A673 (cell line): ENCODE measurements at regions of chr16 and their contacts with region 1.

Region 1: GRCh38 chr16:85245307-85246172 is 133.3 kb upstream of the CIBAR2 start:
- DNase-seq: peak; percentile 88
- H3K4me3 ChIP-seq: peak overlapping the region; percentile 20
- H3K27ac ChIP-seq: peak overlapping the region; percentile 45
- H3K4me1 ChIP-seq: peaks cover 62% of the 10 kb centered on the region
- H3K27me3 ChIP-seq: no peaks in the 10 kb centered on the region
- CTCF ChIP-seq: peak; percentile 95

Region 2: GRCh38 chr16:85114909-85115567 is 130.5 kb before region 1 on chr16:
- CTCF ChIA-PET with region 1: interaction called, 9 read pairs
- POLR2A ChIA-PET with region 1: no interaction called
- intact Hi-C with region 1: loop called (anchors 10 kb)
- DNase-seq: peak; percentile 83
- H3K4me3 ChIP-seq: peak overlapping the region; percentile 18
- H3K27ac ChIP-seq: peak overlapping the region; percentile 55
- H3K4me1 ChIP-seq: peaks cover 4% of the 10 kb centered on the region
- H3K27me3 ChIP-seq: no peaks in the 10 kb centered on the region
- CTCF ChIP-seq: peak; percentile 98

Region 3: DNA sequence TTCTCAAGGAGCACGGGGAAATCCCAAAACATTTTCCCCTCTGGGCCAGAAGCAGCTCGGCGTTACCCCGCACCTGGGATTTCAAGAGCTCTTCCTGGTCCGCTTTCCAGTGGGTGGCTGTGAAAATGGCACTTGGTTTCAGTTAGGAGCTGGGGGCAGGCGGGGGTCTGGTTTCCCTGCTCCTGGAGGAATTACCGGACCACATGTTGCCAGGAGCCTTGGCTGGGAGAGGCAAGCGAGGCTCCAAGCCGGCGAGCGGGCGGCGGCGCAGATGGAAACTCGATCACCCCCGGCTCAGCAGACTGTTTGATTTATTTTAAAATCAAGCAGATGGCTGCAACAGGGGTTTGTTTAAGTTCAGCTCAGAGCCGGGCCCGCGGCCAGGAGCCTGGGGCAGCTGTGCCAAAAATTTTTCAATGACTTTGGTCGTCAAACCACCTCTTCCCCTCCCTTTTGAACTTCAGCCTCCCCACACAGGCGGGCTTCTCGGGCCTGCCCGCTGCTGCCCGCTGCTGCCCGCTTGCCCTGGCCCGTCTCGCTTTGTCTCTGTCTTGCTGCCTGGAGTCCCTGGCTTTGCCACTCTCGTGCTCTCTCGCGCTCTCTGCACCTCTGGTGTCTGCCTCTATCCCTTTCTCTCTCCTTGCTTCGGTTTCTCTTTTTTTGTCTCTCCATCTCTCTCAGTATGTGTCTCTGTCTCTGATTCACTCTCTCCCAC is 25.3 kb before region 1 on chr16:
- CTCF ChIA-PET with region 1: no interaction called
- POLR2A ChIA-PET with region 1: interaction called, 16 read pairs
- intact Hi-C with region 1: no loop called
- DNase-seq: peak; percentile 79
- H3K4me3 ChIP-seq: peak overlapping the region; percentile 10
- H3K27ac ChIP-seq: peak overlapping the region; percentile 91
- H3K4me1 ChIP-seq: peaks cover 42% of the 10 kb centered on the region
- H3K27me3 ChIP-seq: no peaks in the 10 kb centered on the region
- CTCF ChIP-seq: no peak

Region 4: DNA sequence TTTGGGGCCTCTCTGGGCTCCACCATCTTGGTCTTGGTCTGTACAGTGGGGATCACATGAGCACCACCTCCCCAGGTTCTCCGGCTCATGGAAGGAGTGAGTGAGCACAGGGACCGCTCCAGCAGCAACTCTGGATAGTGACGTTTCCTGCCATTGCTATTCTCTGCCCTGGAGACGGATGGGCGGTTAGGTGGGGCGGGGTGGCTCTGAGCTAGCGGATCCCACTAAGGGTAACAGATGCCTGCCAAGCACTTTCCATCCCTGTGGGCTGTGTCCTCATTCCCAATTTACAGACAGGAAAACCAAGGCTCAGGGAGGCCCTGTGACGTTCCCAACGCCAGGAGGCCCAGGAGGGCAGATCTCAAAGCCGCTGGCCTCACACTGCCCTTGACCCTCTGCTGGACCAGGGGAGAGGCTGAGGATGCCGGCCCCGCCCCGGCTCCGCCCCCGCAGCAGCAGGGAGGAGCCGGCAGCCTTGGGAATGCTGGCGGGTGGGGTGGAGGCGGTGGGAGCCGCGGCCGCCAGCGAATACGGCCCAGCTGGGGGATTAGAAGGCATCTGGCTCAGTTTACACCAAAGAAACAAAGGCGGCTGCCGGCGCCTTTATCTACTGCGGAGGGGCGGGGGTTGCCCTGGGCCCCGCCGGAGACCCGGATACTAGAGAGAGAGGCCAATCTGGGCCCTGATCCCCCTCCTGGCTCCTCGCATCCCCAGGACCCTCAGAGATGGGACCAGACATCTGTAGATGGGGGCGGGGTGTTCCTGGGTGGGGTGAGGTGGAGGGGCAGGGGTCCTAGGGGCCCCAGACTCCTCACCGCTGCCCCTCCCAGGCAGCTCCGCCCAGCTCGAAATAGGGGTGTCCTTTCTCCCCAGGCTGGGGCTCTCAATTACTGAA is 11.0 kb before region 1 on chr16:
- CTCF ChIA-PET with region 1: interaction called, 12 read pairs
- POLR2A ChIA-PET with region 1: no interaction called
- intact Hi-C with region 1: no loop called
- DNase-seq: peak; percentile 93
- H3K4me3 ChIP-seq: peak overlapping the region; percentile 55
- H3K27ac ChIP-seq: peak overlapping the region; percentile 85
- H3K4me1 ChIP-seq: peaks cover 65% of the 10 kb centered on the region
- H3K27me3 ChIP-seq: no peaks in the 10 kb centered on the region
- CTCF ChIP-seq: no peak

Region 5: GRCh38 chr16:85615852-85616606 is 370.5 kb after region 1 on chr16:
- CTCF ChIA-PET with region 1: interaction called, 11 read pairs
- POLR2A ChIA-PET with region 1: no interaction called
- intact Hi-C with region 1: loop called (anchors 10 kb)
- DNase-seq: peak; percentile 92
- H3K4me3 ChIP-seq: peak overlapping the region; percentile 86
- H3K27ac ChIP-seq: peak overlapping the region; percentile 9
- H3K4me1 ChIP-seq: peaks cover 60% of the 10 kb centered on the region
- H3K27me3 ChIP-seq: no peaks in the 10 kb centered on the region
- CTCF ChIP-seq: peak; percentile 97

Region 6: GRCh38 chr16:85626191-85626981 is 380.8 kb after region 1 on chr16:
- CTCF ChIA-PET with region 1: no interaction called
- POLR2A ChIA-PET with region 1: no interaction called
- intact Hi-C with region 1: loop called (anchors 10 kb)
- DNase-seq: peak; percentile 91
- H3K4me3 ChIP-seq: peak overlapping the region; percentile 21
- H3K27ac ChIP-seq: peak overlapping the region; percentile 71
- H3K4me1 ChIP-seq: peaks cover 31% of the 10 kb centered on the region
- H3K27me3 ChIP-seq: no peaks in the 10 kb centered on the region
- CTCF ChIP-seq: no peak

Region 7: GRCh38 chr16:85869785-85870558 is 624.4 kb after region 1 on chr16:
- CTCF ChIA-PET with region 1: no interaction called
- POLR2A ChIA-PET with region 1: no interaction called
- intact Hi-C with region 1: no loop called
- DNase-seq: no peak
- H3K4me3 ChIP-seq: no peak overlapping the region
- H3K27ac ChIP-seq: no peak overlapping the region
- H3K4me1 ChIP-seq: no peaks in the 10 kb centered on the region
- H3K27me3 ChIP-seq: peaks cover 68% of the 10 kb centered on the region
- CTCF ChIP-seq: no peak